ENCODE measurements at regions of chr22 and their contacts with region 1.

Region 1: GRCh38 chr22:29245637-29246385 is 22.0 kb downstream of the RHBDD3 start:
- DNase-seq: peak; percentile 91
- H3K4me3 Mint-ChIP-seq: no peak overlapping the region
- H3K27ac Mint-ChIP-seq: no peak overlapping the region
- H3K4me1 Mint-ChIP-seq: peaks cover 2% of the 10 kb centered on the region
- H3K27me3 Mint-ChIP-seq: peaks cover 23% of the 10 kb centered on the region

Region 2: DNA sequence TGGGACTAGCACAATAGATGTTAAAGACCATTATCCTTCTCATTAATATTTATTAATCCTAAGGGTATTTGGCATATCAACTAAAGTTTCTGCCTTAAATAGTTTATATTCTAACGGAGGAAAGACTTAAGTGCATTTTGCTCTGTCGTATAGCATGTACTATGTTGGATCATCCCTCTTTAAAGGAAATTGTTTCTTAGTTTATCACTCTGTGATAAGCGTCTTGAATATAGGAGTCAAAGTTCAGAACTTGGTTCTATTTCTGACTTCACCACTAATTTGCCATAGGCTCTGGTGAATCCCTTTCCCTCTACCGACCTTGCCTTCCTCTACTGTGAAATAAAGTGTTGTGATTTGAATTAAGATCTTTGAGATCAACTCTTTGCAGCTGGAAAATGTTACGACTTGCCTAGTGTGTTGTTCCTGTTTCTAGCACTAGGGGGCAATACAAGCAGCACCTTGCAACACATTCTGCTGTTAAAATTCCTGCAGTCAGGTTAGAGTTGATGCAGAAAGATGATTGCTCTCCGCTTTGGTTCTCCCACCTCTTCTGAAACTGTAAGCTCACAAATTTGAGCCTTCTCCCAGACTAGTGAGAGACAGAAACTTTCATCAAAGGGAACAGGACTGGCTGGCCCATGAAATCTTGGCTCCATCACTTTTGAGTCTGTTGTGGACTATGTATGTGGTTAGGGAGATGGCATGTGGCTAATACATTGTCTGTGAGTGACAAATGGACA is 390.3 kb before region 1 on chr22:
- intact Hi-C with region 1: loop called (anchors 1 kb)
- DNase-seq: peak; percentile 85
- H3K4me3 Mint-ChIP-seq: no peak overlapping the region
- H3K27ac Mint-ChIP-seq: no peak overlapping the region
- H3K4me1 Mint-ChIP-seq: no peaks in the 10 kb centered on the region
- H3K27me3 Mint-ChIP-seq: peaks cover 13% of the 10 kb centered on the region

Region 3: GRCh38 chr22:28955817-28956216 is 290.0 kb before region 1 on chr22:
- intact Hi-C with region 1: no loop called
- DNase-seq: peak; percentile 92
- H3K4me3 Mint-ChIP-seq: peak overlapping the region; percentile 35
- H3K27ac Mint-ChIP-seq: peak overlapping the region; percentile 63
- H3K4me1 Mint-ChIP-seq: peaks cover 12% of the 10 kb centered on the region
- H3K27me3 Mint-ChIP-seq: peaks cover 87% of the 10 kb centered on the region

Region 4: GRCh38 chr22:29154364-29155048 is 91.3 kb before region 1 on chr22:
- intact Hi-C with region 1: loop called (anchors 2 kb)
- DNase-seq: peak; percentile 93
- H3K4me3 Mint-ChIP-seq: no peak overlapping the region
- H3K27ac Mint-ChIP-seq: no peak overlapping the region
- H3K4me1 Mint-ChIP-seq: peaks cover 10% of the 10 kb centered on the region
- H3K27me3 Mint-ChIP-seq: peaks cover 28% of the 10 kb centered on the region

Region 5: DNA sequence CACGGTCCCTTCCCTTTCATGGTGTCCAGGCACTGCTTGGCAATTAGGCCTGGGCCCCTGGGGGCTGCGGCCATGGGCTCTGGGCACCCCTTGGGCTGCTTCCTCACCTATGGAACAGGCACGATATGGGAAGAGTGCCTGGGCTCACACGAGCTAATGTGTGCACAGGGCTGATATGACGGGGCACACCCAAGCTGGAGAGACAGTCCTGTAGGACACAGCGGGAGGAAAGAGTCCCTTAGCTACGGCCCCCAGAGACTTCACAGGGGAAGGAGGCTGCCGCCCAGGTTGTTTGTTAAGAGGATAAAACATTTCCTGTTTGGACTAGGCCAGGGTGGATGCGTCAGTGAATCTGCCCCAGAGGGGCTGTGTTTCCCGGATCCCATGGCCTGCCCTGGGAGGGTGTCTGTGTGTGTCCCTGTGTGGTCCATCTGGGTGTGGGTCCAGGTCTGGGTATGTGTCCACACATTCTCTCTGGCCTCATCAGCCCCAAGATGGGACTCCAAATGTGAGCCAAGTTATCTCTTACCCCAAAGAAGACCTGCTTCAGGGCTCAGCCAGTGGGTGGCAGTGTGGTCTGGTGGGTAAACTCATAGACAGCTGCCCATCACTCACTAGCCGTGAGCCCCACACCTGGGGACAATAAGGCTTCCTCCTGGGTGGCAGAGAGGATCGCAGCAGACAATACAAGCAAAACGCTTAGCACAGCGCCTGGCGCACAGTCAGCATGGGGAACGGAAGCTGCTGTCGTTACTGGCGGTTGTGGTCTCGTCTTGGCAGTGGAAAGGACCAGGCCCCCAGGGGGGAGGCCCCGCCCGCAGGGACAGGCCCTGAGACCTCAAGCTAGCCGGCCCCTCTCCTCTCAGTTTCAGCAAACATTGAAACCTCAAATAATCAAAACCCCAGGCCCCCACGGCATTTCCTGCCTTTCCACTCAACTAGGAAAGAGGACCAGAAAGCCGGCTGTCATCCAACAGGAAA is 43.3 kb before region 1 on chr22:
- intact Hi-C with region 1: loop called (anchors 2 kb)
- DNase-seq: peak; percentile 82
- H3K4me3 Mint-ChIP-seq: peak overlapping the region; percentile 10
- H3K27ac Mint-ChIP-seq: no peak overlapping the region
- H3K4me1 Mint-ChIP-seq: peaks cover 16% of the 10 kb centered on the region
- H3K27me3 Mint-ChIP-seq: peaks cover 56% of the 10 kb centered on the region